Activated naive CD4-positive, alpha-beta T cell treated with anti-CD3 and anti-CD28 coated beads for 36 hours (primary cell): ENCODE measurements at regions of chr11 and their contacts with region 1.

Region 1: DNA sequence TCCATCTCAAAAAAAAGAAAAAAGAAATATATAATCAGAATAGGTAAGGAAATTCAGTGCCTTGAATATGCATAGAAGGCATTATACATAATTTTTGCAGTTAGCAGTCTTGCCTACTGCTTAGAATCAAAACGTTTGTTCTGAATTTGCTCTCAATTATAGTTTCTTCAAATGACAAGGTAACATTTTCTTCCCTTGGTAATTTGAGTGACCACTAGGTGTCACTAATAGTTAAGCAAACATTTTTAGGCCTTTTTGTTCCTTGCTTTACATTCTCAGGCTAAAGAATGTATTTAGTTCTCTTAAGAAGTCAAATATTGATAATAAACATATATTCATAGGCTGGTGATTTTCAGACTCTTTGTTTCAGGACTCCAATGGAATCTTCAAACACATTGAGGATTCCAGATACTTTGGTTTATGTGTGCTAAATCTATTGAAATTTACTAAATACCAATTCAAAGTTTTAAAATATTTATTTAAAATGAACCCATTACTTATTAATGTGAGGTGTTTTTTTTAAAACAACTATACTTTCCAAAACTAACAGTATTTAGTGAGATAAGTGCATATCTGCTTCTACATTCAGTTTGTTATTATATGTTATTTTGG is 55.0 kb upstream of the DEPDC7 start:
- DNase-seq: no peak
- H3K4me3 Mint-ChIP-seq: no peak overlapping the region
- H3K27ac Mint-ChIP-seq: no peak overlapping the region
- H3K4me1 Mint-ChIP-seq: peaks cover 8% of the 10 kb centered on the region
- H3K27me3 Mint-ChIP-seq: no peaks in the 10 kb centered on the region

Region 2: DNA sequence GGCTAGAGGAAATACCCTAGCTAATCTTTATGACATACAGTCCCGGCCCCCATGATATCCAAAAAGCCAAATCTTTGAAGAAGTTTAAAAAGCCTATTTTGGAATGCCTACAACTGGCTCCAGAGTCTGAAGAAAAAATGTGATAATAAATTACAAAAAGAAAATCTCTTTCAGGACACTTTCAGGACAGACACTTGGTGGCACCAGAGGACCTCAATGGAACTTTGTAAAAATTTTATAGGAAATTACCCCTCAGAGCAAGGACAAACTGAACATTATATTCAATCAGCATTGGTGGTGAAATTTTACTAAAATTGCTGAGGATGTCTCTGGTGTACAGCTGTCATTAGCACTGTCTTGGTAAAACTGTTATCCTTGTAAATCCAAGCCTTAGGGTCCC is 247.2 kb before region 1 on chr11:
- CTCF ChIA-PET with region 1: no interaction called
- intact Hi-C with region 1: loop called (anchors 2 kb)
- DNase-seq: peak; percentile 23
- H3K4me3 Mint-ChIP-seq: no peak overlapping the region
- H3K27ac Mint-ChIP-seq: no peak overlapping the region
- H3K4me1 Mint-ChIP-seq: no peaks in the 10 kb centered on the region
- H3K27me3 Mint-ChIP-seq: peaks cover 22% of the 10 kb centered on the region

Region 3: GRCh38 chr11:32809313-32809712 is 151.3 kb before region 1 on chr11:
- CTCF ChIA-PET with region 1: interaction called, 3 read pairs
- intact Hi-C with region 1: loop called (anchors 1 kb)
- DNase-seq: peak; percentile 87
- H3K4me3 Mint-ChIP-seq: no peak overlapping the region
- H3K27ac Mint-ChIP-seq: no peak overlapping the region
- H3K4me1 Mint-ChIP-seq: no peaks in the 10 kb centered on the region
- H3K27me3 Mint-ChIP-seq: no peaks in the 10 kb centered on the region

Region 4: DNA sequence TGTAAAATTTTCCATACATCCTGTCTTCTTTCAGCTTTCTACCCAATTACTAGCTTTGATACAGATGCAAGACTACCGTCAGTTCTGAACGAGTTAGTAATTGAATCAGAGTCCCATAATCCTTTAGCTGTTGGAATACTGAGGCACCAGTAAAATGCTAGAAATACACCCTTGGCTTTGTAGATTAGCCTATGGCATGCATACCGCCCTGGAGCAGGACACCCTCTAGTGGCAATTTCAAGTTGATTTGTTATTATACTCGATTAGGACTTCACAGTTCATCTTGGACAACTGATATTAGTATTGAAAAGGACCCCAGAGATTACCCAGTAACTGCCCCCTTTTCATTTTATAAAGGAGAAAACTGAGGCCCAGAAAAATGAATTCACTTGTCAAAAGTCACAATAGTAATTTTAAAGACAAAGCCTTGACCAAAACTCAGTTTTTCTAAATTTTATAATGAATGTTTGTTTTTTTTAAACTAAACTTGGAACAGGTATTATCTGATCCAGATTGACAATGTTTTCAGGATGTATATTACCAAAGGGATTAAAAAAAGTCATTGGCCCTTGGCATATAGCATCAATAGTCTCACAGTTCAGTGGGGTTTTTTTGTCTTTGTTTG is 369.2 kb after region 1 on chr11:
- CTCF ChIA-PET with region 1: interaction called, 3 read pairs
- intact Hi-C with region 1: loop called (anchors 1 kb)
- DNase-seq: peak; percentile 66
- H3K4me3 Mint-ChIP-seq: no peak overlapping the region
- H3K27ac Mint-ChIP-seq: no peak overlapping the region
- H3K4me1 Mint-ChIP-seq: peaks cover 13% of the 10 kb centered on the region
- H3K27me3 Mint-ChIP-seq: no peaks in the 10 kb centered on the region

Region 5: DNA sequence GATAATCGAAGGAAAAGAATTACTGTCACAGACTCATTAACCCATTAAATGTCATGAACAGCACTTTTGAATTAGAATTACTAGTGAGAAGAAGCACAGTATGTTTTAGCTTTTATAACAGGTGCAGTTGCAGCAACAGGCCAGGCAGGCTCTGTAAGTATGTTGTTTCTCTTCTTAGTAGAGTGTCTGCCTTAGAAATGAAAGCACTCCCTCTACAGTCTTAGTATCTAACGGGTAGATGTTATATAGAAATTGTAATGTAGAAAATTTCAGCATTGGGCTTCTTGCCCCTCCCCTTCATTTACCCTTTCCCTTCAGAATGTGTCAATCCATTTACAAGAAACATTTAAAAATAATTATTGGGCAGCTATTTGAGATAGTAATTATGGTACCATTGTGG is 384.0 kb after region 1 on chr11:
- CTCF ChIA-PET with region 1: interaction called, 3 read pairs
- intact Hi-C with region 1: loop called (anchors 5 kb)
- DNase-seq: no peak
- H3K4me3 Mint-ChIP-seq: no peak overlapping the region
- H3K27ac Mint-ChIP-seq: no peak overlapping the region
- H3K4me1 Mint-ChIP-seq: peaks cover 2% of the 10 kb centered on the region
- H3K27me3 Mint-ChIP-seq: no peaks in the 10 kb centered on the region